Gastrocnemius medialis (tissue), 4 donors: ENCODE measurements at regions of chr2 and their contacts with region 1.

Region 1: DNA sequence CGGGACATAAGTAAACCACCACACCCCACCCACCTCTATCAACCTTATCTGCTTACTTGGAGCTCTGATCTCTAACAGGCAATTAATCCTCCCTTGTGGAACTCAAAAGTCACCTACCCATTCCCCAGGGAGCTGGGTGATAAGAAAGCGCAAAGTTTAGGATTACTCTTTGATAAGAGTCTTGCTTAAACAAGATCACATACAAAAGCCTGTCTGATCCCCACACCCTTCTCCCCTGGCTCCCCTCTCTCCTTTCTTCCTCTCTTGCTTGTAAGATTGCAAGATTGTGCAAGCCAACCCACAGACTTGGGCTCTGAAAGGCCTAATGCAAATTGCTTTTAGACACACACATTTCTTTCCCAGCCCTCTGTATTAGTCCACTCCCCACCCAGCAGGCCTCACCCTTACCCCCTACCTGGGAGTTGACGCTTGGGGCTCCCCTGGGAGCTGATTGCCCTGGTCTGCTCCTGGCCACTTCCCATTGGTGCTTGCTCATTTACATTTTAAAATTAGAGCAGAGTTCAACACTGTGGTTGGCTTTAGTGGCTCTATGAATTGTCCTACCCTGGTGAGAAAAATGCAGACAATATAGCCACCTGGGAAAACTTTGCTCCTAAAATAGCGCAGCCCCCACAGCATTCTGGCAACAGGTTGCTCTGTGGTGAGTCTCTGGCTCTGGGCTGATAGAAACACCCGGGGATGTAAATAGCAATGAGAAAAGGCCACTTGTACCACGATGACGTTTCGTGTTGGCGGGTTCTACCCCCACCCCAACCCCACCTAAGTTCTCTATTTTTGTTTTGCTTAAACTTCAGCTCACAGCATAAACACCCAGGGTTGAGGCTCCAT is 92.8 kb upstream of the MSH2 start:
- DNase-seq: no peak
- ATAC-seq: peak; percentile 40
- H3K4me3 ChIP-seq: no peak overlapping the region
- H3K27ac ChIP-seq: peak overlapping the region; percentile 9 to 58 (median 46)
- H3K4me1 ChIP-seq: peaks cover 8 to 11% of the 10 kb centered on the region in 2 donors
- H3K27me3 ChIP-seq: no peaks in the 10 kb centered on the region
- CTCF ChIP-seq: no peak
- POLR2A ChIP-seq: no peak

Region 2: DNA sequence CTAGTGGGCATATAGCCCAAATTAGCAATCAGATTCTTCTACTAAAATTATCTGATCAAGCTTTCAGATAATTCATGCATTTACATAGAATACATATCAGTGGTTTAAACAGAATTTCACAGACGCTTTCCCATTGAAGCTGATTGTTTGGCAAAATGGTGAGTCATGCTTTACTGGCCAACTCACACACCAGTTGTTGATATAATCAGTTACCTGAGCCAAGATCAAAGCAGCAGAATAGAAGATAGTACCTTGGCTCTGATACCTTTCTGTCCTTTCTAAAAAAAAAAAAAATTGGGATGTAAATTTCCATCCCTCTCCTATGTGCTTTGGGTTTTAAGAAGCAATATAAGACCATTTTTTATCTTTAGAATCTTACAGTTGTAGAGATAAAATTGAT is 572.6 kb before region 1 on chr2:
- in situ Hi-C with region 1: no loop called
- intact Hi-C with region 1: no loop called
- DNase-seq: no peak
- ATAC-seq: peak in 1 of 2 donors; percentile 33
- H3K4me3 ChIP-seq: no peak overlapping the region
- H3K27ac ChIP-seq: peak overlapping the region in 3 of 4 donors; percentile 7 to 59 (median 8)
- H3K4me1 ChIP-seq: peaks cover 30 to 48% of the 10 kb centered on the region in 2 donors
- H3K27me3 ChIP-seq: no peaks in the 10 kb centered on the region
- CTCF ChIP-seq: no peak
- POLR2A ChIP-seq: no peak

Region 3: DNA sequence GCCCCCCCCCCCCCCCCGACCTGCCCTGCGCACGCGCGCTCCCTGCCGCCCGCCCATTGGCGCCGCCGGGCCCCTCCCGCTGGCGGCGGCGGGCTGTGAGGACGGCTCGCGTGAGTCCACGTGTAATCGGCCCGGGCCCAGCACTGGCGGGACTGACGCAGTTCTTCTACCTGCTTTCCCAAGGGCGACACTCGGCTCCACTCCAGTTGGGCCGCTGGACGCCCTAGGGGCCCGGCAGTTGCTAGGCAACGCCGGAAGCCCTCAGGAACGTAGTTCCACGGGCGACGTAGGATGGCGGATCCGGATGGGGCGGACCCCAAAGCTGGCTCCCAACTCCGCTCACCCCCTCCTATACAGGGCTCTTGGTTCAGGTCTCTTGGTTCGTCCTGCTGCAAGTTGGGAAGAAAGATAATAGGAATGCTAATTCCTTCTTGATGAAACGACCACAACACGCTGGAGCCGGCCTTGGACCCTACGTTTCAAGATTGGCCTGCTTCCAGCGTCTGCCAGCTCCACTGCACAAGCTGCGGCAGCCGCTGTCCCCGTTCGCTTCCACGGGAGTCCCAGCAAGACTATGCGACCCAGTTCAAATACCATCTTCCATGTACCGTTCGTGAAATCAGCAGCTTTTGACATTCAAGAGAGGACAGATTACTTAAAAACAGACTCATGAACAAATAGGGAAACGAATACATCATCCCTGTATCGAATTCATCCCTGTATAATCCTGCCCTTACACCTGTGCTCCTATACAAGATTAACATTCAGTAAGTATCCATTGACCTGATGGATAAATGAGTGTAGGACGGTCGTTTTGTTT is 394.2 kb before region 1 on chr2:
- in situ Hi-C with region 1: no loop called
- intact Hi-C with region 1: loop called (anchors 10 kb)
- DNase-seq: peak; percentile 96 to 99
- ATAC-seq: peak; percentile 82 to 86
- H3K4me3 ChIP-seq: peak overlapping the region; percentile 93 to 100 (median 96)
- H3K27ac ChIP-seq: peak overlapping the region; percentile 96 to 100 (median 99)
- H3K4me1 ChIP-seq: peaks cover 36% of the 10 kb centered on the region in 2 donors
- H3K27me3 ChIP-seq: no peaks in the 10 kb centered on the region
- CTCF ChIP-seq: no peak
- POLR2A ChIP-seq: peak; percentile 47 to 69